ENCODE measurements at regions of chr19 and their contacts with region 1.

Region 1: GRCh38 chr19:21767065-21767800 is at the start of gene ZNF100:
- DNase-seq: peak; percentile 92
- H3K4me3 Mint-ChIP-seq: peak within 1 kb of the TSS; percentile 92
- H3K27ac Mint-ChIP-seq: peak within 1 kb of the TSS; percentile 81
- H3K4me1 Mint-ChIP-seq: peaks cover 22% of the 10 kb centered on the region
- H3K27me3 Mint-ChIP-seq: no peaks in the 10 kb centered on the region
- total RNA-seq, gene ZNF100: 20.9 to 23.6 TPM

Region 2: DNA sequence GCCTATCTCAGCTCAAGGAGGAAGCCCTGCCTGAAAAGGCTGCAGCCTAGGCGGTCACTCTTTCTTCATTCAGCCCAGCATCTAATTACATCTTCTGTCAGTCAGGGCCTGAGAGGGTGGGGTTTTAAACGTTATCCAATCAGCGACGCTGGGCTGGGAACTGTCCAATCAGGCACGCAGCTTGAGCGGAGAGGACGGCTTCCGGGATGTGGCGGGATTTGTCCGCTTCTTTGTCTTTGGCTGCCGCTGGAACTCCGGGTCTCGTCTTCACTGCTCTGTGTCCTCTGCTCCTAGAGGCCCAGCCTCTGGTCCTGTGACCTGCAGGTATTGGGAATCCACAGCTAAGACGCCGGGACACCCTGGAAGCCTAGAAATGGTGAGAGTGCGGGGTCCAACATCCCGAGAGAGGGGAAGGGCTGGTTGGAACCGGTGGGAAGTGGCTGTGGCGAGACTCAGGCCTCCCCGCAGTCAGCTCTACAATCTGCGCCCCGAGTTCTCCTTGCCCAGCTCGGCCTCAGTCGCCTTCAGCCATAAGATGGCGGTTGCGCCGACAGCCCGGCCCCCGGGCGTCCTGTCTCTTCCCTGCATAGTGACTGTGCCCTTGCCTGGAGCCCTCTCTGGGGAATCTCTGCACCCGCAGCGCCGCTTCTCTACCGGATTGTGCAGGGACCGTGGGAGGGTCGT is 408.3 kb before region 1 on chr19 and contains the start of gene ZNF738:
- CTCF ChIA-PET with region 1: no interaction called
- POLR2A ChIA-PET with region 1: no interaction called
- intact Hi-C with region 1: loop called (anchors 2 kb)
- DNase-seq: peak; percentile 92
- H3K4me3 Mint-ChIP-seq: peak within 1 kb of the TSS; percentile 99
- H3K27ac Mint-ChIP-seq: peak within 1 kb of the TSS; percentile 95
- H3K4me1 Mint-ChIP-seq: peaks cover 12% of the 10 kb centered on the region
- H3K27me3 Mint-ChIP-seq: no peaks in the 10 kb centered on the region
- total RNA-seq, gene ZNF738: 11.8 to 15.3 TPM

Region 3: GRCh38 chr19:21568816-21569493 is 198.3 kb before region 1 on chr19:
- CTCF ChIA-PET with region 1: no interaction called
- POLR2A ChIA-PET with region 1: interaction called, 3 read pairs
- intact Hi-C with region 1: loop called (anchors 5 kb)
- DNase-seq: peak; percentile 92
- H3K4me3 Mint-ChIP-seq: peak overlapping the region; percentile 94
- H3K27ac Mint-ChIP-seq: peak overlapping the region; percentile 91
- H3K4me1 Mint-ChIP-seq: peaks cover 23% of the 10 kb centered on the region
- H3K27me3 Mint-ChIP-seq: no peaks in the 10 kb centered on the region

Region 4: DNA sequence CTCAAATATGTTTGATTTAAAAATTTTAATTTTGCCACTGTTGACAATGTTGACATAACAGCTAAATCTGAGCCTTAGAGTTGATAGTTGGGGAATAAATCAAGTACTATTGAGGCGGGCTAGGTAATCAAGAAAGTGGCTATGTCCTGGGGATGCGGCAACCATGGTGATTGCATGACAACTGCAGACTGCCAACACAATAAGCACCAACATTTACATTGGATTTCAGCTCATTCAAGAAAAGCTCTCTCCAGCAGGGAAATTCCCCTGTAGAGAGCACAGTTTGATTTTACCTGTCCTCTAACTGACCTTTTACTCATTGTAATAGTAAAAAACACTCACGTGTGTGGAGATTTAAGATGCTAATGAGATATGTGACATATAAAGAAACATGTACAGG is 62.9 kb before region 1 on chr19:
- CTCF ChIA-PET with region 1: no interaction called
- POLR2A ChIA-PET with region 1: no interaction called
- intact Hi-C with region 1: no loop called
- DNase-seq: no peak
- H3K4me3 Mint-ChIP-seq: no peak overlapping the region
- H3K27ac Mint-ChIP-seq: no peak overlapping the region
- H3K4me1 Mint-ChIP-seq: no peaks in the 10 kb centered on the region
- H3K27me3 Mint-ChIP-seq: no peaks in the 10 kb centered on the region

Region 5: GRCh38 chr19:21749090-21749489 is 18.1 kb before region 1 on chr19:
- CTCF ChIA-PET with region 1: interaction called, 4 read pairs
- POLR2A ChIA-PET with region 1: interaction called, 3 read pairs
- intact Hi-C with region 1: loop called (anchors 1 kb)
- DNase-seq: no peak
- H3K4me3 Mint-ChIP-seq: no peak overlapping the region
- H3K27ac Mint-ChIP-seq: peak overlapping the region; percentile 28
- H3K4me1 Mint-ChIP-seq: peaks cover 17% of the 10 kb centered on the region
- H3K27me3 Mint-ChIP-seq: no peaks in the 10 kb centered on the region

Region 6: GRCh38 chr19:21812450-21812849 is 45.2 kb after region 1 on chr19:
- CTCF ChIA-PET with region 1: no interaction called
- POLR2A ChIA-PET with region 1: no interaction called
- intact Hi-C with region 1: no loop called
- DNase-seq: no peak
- H3K4me3 Mint-ChIP-seq: no peak overlapping the region
- H3K27ac Mint-ChIP-seq: no peak overlapping the region
- H3K4me1 Mint-ChIP-seq: no peaks in the 10 kb centered on the region
- H3K27me3 Mint-ChIP-seq: no peaks in the 10 kb centered on the region

Region 7: GRCh38 chr19:21835810-21836444 is 68.7 kb after region 1 on chr19 and contains the start of gene ZNF43:
- CTCF ChIA-PET with region 1: interaction called, 3 read pairs
- POLR2A ChIA-PET with region 1: interaction called, 28 read pairs
- intact Hi-C with region 1: loop called (anchors 1 kb)
- DNase-seq: peak; percentile 96
- H3K4me3 Mint-ChIP-seq: peak within 1 kb of the TSS; percentile 95
- H3K27ac Mint-ChIP-seq: peak within 1 kb of the TSS; percentile 99
- H3K4me1 Mint-ChIP-seq: peaks cover 37% of the 10 kb centered on the region
- H3K27me3 Mint-ChIP-seq: no peaks in the 10 kb centered on the region
- total RNA-seq, gene ZNF43: 25.2 to 25.3 TPM

Region 8: DNA sequence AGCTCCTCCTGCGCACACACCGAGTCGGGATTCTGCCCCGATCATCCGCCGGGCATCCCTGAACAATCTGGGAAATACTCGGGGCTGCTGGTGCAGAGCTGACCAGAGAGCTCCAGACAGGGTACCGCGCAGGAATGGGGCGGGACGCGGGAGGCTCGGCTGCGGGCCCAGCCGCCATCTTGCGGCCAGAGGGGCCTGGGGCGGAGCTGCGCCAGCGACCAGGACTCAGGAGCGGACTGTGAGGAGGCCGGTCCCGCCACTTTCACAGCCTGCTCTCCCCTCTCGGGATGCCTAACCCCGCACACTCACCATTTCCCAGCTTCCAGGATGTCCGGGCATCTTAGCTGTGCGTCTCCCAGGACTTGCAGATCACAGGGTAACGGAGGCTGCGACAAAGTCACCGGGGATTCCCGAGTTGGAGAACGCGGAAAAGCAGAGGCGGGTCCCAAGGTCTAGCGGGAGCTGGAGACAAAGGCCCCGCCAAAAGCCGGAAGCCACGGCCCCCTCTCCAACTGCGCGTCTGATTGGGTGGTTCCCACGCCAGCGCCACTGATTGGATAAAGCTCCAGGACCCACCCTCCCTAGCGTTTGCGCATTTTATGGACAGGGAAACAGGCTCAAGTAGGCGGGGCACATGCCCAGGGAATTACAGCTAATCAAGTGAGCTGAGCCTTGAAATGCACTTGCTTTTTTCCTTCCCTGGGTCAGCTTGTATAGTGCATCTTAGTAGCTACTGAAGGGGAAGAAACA is 84.5 kb after region 1 on chr19:
- CTCF ChIA-PET with region 1: interaction called, 7 read pairs
- POLR2A ChIA-PET with region 1: no interaction called
- intact Hi-C with region 1: loop called (anchors 1 kb)
- DNase-seq: peak; percentile 96
- H3K4me3 Mint-ChIP-seq: peak overlapping the region; percentile 90
- H3K27ac Mint-ChIP-seq: peak overlapping the region; percentile 83
- H3K4me1 Mint-ChIP-seq: peaks cover 27% of the 10 kb centered on the region
- H3K27me3 Mint-ChIP-seq: no peaks in the 10 kb centered on the region

Measured in activated CD4-positive, alpha-beta memory T cell treated with anti-CD3 and anti-CD28 coated beads for 36 hours (primary cell).